HCT116 (cell line): ENCODE measurements at regions of chr10 and their contacts with region 1.

Region 1: GRCh38 chr10:22988581-22989360 is 60.9 kb downstream of the ARMC3 start:
- DNase-seq: peak; percentile 57
- ATAC-seq: peak; percentile 72
- H3K4me3 ChIP-seq: peak overlapping the region in 1 of 2 experiments; percentile 23; a peak in 2 of 4 replicates
- H3K27ac ChIP-seq: no peak overlapping the region
- H3K4me1 ChIP-seq: peaks cover 0 to 16% of the 10 kb centered on the region in 2 experiments; a peak in 1 of 4 replicates
- H3K27me3 ChIP-seq: no peaks in the 10 kb centered on the region
- CTCF ChIP-seq: peak; percentile 78 to 93 (median 82)
- POLR2A ChIP-seq: no peak
- RAD21 ChIP-seq: peak; percentile 96

Region 2: GRCh38 chr10:21495752-21496342 is 1492.9 kb before region 1 on chr10:
- CTCF ChIA-PET with region 1: no interaction called
- POLR2A ChIA-PET with region 1: interaction called, 4 read pairs
- RAD21 ChIA-PET with region 1: no interaction called
- intact Hi-C with region 1: loop called (anchors 5 kb)
- DNase-seq: peak; percentile 67
- ATAC-seq: peak; percentile 72
- H3K4me3 ChIP-seq: peak overlapping the region; percentile 63 to 80
- H3K27ac ChIP-seq: peak overlapping the region; percentile 83
- H3K4me1 ChIP-seq: peaks cover 2 to 20% of the 10 kb centered on the region in 2 experiments; a peak in 2 of 4 replicates
- H3K27me3 ChIP-seq: peaks cover 3% of the 10 kb centered on the region; the same call in 1 of the 2 replicates
- CTCF ChIP-seq: peak; percentile 72 to 92 (median 87)
- POLR2A ChIP-seq: peak; percentile 62
- RAD21 ChIP-seq: peak; percentile 96

Region 3: GRCh38 chr10:22010973-22011408 is 977.8 kb before region 1 on chr10:
- CTCF ChIA-PET with region 1: interaction called, 3 read pairs
- POLR2A ChIA-PET with region 1: no interaction called
- RAD21 ChIA-PET with region 1: no interaction called
- intact Hi-C with region 1: loop called (anchors 5 kb)
- DNase-seq: peak; percentile 18
- ATAC-seq: no peak
- H3K4me3 ChIP-seq: no peak overlapping the region
- H3K27ac ChIP-seq: no peak overlapping the region
- H3K4me1 ChIP-seq: no peaks in the 10 kb centered on the region
- H3K27me3 ChIP-seq: no peaks in the 10 kb centered on the region
- CTCF ChIP-seq: peak in 1 of 3 experiments; percentile 40; a peak in 2 of 6 replicates
- POLR2A ChIP-seq: no peak
- RAD21 ChIP-seq: peak; percentile 55

Region 4: GRCh38 chr10:22436884-22437619 is 551.7 kb before region 1 on chr10:
- CTCF ChIA-PET with region 1: no interaction called
- POLR2A ChIA-PET with region 1: no interaction called
- RAD21 ChIA-PET with region 1: no interaction called
- intact Hi-C with region 1: loop called (anchors 5 kb)
- DNase-seq: peak; percentile 92
- ATAC-seq: peak; percentile 77
- H3K4me3 ChIP-seq: peak overlapping the region; percentile 60 to 71
- H3K27ac ChIP-seq: peak overlapping the region; percentile 91
- H3K4me1 ChIP-seq: peaks cover 25 to 55% of the 10 kb centered on the region in 2 experiments
- H3K27me3 ChIP-seq: no peaks in the 10 kb centered on the region
- CTCF ChIP-seq: no peak
- POLR2A ChIP-seq: peak; percentile 62
- RAD21 ChIP-seq: peak; percentile 16; the same call in 1 of the 2 replicates

Region 5: GRCh38 chr10:22573820-22574569 is 414.8 kb before region 1 on chr10:
- CTCF ChIA-PET with region 1: interaction called, 7 read pairs
- POLR2A ChIA-PET with region 1: no interaction called
- RAD21 ChIA-PET with region 1: no interaction called
- intact Hi-C with region 1: loop called (anchors 1 kb)
- DNase-seq: peak; percentile 32
- ATAC-seq: peak; percentile 27; the same call in 1 of the 2 replicates
- H3K4me3 ChIP-seq: no peak overlapping the region
- H3K27ac ChIP-seq: no peak overlapping the region
- H3K4me1 ChIP-seq: no peaks in the 10 kb centered on the region
- H3K27me3 ChIP-seq: no peaks in the 10 kb centered on the region
- CTCF ChIP-seq: peak; percentile 45 to 68 (median 54); a peak in 5 of 6 replicates
- POLR2A ChIP-seq: no peak
- RAD21 ChIP-seq: peak; percentile 63

Region 6: DNA sequence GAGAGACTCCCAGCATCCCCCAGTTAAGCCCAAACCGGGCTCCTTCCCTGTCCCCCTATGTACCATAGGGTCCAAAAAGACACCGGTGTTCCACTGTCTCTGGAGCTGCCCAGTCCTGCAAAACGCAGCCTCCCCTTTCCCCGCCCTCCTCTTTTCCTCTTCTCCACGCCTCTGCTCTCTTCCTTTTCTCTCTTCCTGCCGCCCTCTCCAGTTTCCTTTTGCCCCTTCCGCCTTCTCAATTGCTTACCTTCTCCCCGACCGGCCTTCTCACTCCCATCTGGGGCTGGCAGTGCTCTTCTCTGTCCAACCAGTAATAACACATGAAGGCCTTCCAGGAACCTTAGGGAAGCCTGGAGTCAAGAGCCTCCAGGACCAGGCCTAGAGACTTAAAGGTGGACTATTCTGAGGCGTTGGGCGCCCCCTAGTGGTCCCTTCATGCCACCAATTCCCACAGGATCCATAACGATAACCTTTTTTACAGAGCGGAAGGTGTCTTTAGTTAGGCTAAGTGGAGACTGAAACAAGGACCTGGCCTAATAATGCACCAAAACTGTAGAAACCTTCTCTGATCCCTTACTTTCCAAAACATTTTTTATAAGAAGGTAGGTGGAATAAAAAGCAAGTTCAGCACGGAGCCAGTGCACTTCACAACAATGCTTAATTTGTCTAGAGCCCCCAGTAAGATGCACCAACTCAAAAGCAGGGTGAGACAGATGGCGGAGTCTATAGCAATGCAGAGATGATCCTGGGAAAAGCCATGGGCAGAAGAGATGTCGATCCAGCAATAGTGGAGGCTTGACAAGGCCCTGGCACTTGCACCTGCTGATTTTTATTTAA is 79.4 kb after region 1 on chr10:
- CTCF ChIA-PET with region 1: no interaction called
- POLR2A ChIA-PET with region 1: no interaction called
- RAD21 ChIA-PET with region 1: no interaction called
- intact Hi-C with region 1: loop called (anchors 2 kb)
- DNase-seq: peak; percentile 81
- ATAC-seq: peak; percentile 98
- H3K4me3 ChIP-seq: no peak overlapping the region
- H3K27ac ChIP-seq: no peak overlapping the region
- H3K4me1 ChIP-seq: peaks cover 4 to 11% of the 10 kb centered on the region in 2 experiments; a peak in 3 of 4 replicates
- H3K27me3 ChIP-seq: no peaks in the 10 kb centered on the region
- CTCF ChIP-seq: peak; percentile 64 to 93 (median 82)
- POLR2A ChIP-seq: no peak
- RAD21 ChIP-seq: peak; percentile 94